ENCODE measurements at regions of chr18 and their contacts with region 1.

Region 1: DNA sequence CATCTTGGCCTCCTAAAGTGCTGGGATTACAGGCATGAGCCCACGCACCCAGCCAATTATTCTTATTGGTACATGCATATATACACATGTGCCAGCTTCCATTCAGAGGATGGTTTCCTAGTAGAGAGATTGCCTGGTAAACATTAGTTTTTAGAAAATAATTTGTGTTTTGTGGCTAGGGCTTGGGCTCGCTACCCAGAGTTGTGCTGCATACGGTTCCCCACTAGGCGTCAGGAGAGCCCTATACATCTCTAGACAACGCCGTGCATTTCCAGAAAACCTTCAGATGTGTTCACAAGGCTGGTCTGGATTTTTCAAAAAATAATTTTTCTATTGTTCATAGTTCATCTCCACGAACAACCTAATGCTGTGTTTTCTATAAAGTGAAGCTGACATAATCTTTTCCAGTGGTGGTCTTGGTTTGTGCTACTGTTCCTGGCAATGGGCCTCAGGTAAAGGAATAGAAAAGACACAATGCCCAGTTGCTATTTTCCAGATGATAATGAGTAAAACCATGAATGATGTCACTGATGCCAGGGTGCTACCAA is 14.7 kb upstream of the AFG3L2 start:
- H3K4me3 ChIP-seq: no peak overlapping the region
- H3K27ac ChIP-seq: no peak overlapping the region
- H3K4me1 ChIP-seq: no peaks in the 10 kb centered on the region
- CTCF ChIP-seq: peak; percentile 73

Region 2: GRCh38 chr18:12154361-12154760 is 237.3 kb before region 1 on chr18:
- CTCF ChIA-PET with region 1: no interaction called
- POLR2A ChIA-PET with region 1: no interaction called
- H3K4me3 ChIP-seq: no peak overlapping the region
- H3K27ac ChIP-seq: no peak overlapping the region
- H3K4me1 ChIP-seq: no peaks in the 10 kb centered on the region
- CTCF ChIP-seq: no peak

Region 3: DNA sequence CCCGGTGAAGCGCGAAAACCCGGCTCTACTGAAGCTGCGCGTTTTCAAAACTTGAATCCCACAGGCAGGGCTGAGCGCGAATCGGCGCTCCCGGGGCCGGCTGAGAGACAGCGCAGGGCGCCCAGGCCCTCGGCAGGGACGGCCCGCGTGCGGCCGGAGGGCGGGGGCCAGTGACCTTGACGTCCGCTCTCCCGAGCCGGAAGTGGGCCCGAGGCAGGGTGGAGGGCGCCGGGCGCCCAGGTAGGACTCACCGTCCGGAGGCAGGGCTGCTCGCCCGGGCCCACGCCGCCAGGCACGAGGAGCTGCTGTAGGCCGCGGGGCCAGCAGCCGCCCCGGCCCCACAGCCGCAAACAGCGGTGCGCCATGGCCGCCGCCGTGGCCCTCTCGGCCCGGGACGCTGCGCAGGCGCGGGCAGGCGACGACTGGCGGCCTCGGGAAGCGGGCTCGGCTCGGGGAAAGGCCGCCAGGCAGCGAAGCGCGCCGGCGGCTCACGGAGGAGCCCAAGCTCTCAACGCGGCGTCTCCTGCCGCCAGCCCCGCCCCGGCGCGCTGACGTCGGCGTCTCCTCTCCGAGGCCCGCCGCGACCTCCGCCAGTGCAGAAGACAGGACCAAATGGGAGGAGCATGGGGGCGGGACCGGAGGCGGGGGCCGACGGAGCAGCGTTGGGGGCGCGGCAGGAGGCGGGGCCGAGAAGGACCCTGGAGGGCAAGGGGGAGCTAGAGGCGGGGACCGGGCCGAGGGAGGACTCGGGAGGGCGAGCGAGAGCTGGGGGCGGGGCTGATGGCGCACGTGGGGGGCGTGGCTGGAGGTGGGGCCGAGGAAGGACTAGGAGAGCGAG is 14.8 kb before region 1 on chr18 and contains the start of gene AFG3L2:
- CTCF ChIA-PET with region 1: interaction called, 15 read pairs
- POLR2A ChIA-PET with region 1: interaction called, 8 read pairs
- H3K4me3 ChIP-seq: peak within 1 kb of the TSS; percentile 68
- H3K27ac ChIP-seq: peak within 1 kb of the TSS; percentile 99
- H3K4me1 ChIP-seq: peaks cover 16% of the 10 kb centered on the region
- CTCF ChIP-seq: no peak

Region 4: DNA sequence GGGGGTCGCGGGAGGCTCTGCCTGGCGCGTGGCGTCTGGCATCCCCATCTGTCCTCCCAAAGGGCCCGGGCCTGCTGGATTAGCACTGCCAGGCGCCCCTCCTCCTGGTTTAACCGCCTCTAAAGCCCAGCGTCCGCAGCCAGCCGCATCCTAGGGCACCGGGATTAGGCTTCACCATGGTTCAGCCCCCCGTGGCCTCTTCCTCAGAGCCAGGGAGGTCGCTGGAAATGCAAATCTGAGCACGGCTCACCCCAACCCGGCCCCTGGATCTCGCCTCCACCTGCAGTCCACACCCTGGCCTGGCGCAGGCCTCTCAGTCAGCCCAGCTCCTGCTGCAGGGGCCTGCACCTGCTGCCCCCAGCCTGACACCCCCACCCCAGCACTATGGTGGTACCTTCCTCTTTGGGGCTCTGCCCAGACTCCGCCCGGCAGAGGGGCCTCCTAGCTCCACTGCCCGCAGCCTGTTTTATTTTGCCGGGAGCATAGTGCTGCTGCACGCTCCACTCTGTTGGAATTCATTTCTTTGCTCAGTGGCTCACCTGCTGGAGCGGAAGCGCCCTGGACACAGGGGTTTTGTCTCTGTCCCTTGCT is 29.2 kb after region 1 on chr18:
- CTCF ChIA-PET with region 1: interaction called, 10 read pairs
- POLR2A ChIA-PET with region 1: no interaction called
- H3K4me3 ChIP-seq: no peak overlapping the region
- H3K27ac ChIP-seq: peak overlapping the region; percentile 64; the same call in 1 of the 2 replicates
- H3K4me1 ChIP-seq: no peaks in the 10 kb centered on the region
- CTCF ChIP-seq: peak; percentile 22; the same call in 1 of the 2 replicates

Region 5: DNA sequence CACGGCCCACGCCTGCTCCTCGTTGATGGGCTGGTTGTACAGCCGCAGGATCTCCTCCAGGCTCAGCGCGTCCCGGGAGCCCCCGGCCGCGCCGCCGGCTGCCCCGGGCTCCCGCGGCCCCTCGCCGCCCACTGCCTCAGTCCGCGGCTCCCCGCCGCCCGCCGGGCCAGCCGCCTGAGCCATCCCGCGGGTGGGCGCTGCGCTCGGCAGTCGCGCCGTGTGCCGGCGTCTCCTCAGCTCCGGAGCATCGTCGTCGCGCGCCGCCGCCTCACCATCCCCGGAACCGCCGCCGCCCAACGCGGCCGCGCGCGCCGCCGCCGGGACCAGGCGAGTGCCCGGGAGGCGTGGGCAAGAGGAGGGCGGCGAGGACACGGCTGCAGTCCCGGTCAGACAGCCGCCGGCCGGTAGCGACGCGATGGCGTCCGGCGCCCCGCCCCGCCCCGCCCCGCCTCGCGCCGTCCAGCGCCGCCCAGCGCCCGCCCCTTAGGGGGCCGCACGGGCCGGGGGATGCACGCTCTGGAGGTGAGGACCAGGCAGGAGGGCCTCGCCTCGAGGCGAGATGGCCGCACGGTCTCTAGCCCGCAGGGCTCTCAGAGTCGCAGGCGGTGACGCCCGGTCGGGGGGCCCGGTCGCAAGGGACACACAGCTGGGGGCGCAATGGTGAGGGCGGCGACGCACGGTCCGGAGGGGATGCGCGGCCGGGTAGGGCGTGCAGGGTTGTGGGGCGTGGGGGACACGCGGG is 266.2 kb after region 1 on chr18 and contains the start of gene SPIRE1:
- CTCF ChIA-PET with region 1: interaction called, 118 read pairs
- POLR2A ChIA-PET with region 1: interaction called, 3 read pairs
- H3K4me3 ChIP-seq: peak within 1 kb of the TSS; percentile 76
- H3K27ac ChIP-seq: peak within 1 kb of the TSS; percentile 91
- H3K4me1 ChIP-seq: peaks cover 5% of the 10 kb centered on the region
- CTCF ChIP-seq: peak; percentile 59

Measured in HEK293 (cell line).